Mammary epithelial cell (primary cell): ENCODE measurements at regions of chr6 and their contacts with region 1.

Region 1: DNA sequence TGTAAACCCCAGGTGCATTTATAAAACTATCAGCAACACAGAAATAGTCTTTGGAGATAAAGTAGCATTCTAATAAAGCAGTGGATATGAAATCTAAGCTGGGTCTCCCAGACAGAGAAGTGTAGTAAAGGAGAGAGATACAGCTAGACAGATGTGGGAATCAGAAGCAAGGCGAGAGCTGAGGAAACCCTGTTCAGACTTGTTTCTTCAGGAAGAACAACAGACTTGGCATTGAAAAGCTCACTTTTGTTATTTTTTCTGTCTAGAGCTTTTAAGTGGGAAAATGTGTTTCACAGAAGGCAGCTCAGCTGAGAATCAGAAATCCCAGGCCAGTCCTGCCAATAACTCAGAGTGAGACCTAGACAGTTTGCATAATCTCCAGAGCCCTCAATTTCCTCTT is 52.9 kb downstream of the SLC35B3 start:
- DNase-seq: peak; percentile 58
- H3K4me3 ChIP-seq: no peak overlapping the region
- H3K27ac ChIP-seq: no peak overlapping the region
- H3K4me1 ChIP-seq: no peaks in the 10 kb centered on the region
- H3K27me3 ChIP-seq: no peaks in the 10 kb centered on the region
- CTCF ChIP-seq: no peak

Region 2: GRCh38 chr6:7673063-7673536 is 709.3 kb before region 1 on chr6:
- CTCF ChIA-PET with region 1: no interaction called
- dilution Hi-C with region 1: no loop called
- in situ Hi-C with region 1: no loop called
- intact Hi-C with region 1: no loop called
- DNase-seq: peak; percentile 81
- H3K4me3 ChIP-seq: no peak overlapping the region
- H3K27ac ChIP-seq: peak overlapping the region; percentile 41
- H3K4me1 ChIP-seq: peaks cover 35% of the 10 kb centered on the region
- H3K27me3 ChIP-seq: no peaks in the 10 kb centered on the region
- CTCF ChIP-seq: peak in 1 of 2 donors; percentile 44

Region 3: GRCh38 chr6:8352335-8352968 is 30.0 kb before region 1 on chr6:
- CTCF ChIA-PET with region 1: no interaction called
- dilution Hi-C with region 1: loop called (anchors 5 kb)
- in situ Hi-C with region 1: no loop called
- intact Hi-C with region 1: no loop called
- DNase-seq: no peak
- H3K4me3 ChIP-seq: no peak overlapping the region
- H3K27ac ChIP-seq: no peak overlapping the region
- H3K4me1 ChIP-seq: no peaks in the 10 kb centered on the region
- H3K27me3 ChIP-seq: peaks cover 2% of the 10 kb centered on the region
- CTCF ChIP-seq: no peak

Region 4: GRCh38 chr6:8579372-8579771 is 196.9 kb after region 1 on chr6:
- CTCF ChIA-PET with region 1: no interaction called
- dilution Hi-C with region 1: no loop called
- in situ Hi-C with region 1: no loop called
- intact Hi-C with region 1: no loop called
- DNase-seq: peak; percentile 28
- H3K4me3 ChIP-seq: no peak overlapping the region
- H3K27ac ChIP-seq: no peak overlapping the region
- H3K4me1 ChIP-seq: peaks cover 6% of the 10 kb centered on the region
- H3K27me3 ChIP-seq: no peaks in the 10 kb centered on the region
- CTCF ChIP-seq: no peak